MCF 10A (cell line): ENCODE measurements at regions of chr20 and their contacts with region 1.

Region 1: DNA sequence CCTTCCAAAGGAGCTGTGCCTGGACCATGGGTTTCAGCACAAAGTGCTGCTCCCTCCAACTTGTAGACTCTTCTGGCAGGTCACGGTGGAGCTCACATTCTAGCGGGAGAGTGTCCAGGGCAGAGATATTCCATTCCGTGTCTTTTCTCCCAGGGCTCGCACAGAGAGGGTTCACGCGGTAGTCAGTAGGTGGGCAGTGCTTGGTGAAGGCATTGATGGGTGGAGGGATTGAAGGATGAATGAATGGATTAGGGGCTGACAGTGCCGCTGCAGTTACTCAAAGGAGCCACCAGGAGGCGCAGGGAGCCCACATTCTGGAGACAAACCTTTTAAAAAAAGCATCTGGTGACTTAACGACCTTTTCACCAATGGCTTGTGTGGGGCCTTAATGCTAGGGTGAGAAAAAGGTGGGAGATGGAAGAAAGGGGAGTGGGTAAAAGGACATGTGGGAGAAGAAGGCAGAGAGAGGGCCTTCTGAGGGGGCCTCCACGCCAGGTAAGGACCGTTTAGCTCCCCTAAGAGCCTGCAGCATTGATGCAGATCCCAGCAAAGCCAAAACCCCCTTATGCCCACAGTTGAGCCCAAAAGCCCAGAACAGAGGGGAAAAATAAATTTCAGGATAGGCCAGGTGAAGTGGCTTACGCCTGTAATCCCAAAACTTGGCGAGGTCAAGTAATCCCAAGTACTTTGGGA is 17.5 kb upstream of the FAM110A start:
- DNase-seq: peak; percentile 72
- H3K4me3 Mint-ChIP-seq: no peak overlapping the region
- H3K27ac Mint-ChIP-seq: no peak overlapping the region
- H3K4me1 Mint-ChIP-seq: no peaks in the 10 kb centered on the region
- H3K27me3 Mint-ChIP-seq: peaks cover 31% of the 10 kb centered on the region
- CTCF ChIP-seq: peak; percentile 97

Region 2: DNA sequence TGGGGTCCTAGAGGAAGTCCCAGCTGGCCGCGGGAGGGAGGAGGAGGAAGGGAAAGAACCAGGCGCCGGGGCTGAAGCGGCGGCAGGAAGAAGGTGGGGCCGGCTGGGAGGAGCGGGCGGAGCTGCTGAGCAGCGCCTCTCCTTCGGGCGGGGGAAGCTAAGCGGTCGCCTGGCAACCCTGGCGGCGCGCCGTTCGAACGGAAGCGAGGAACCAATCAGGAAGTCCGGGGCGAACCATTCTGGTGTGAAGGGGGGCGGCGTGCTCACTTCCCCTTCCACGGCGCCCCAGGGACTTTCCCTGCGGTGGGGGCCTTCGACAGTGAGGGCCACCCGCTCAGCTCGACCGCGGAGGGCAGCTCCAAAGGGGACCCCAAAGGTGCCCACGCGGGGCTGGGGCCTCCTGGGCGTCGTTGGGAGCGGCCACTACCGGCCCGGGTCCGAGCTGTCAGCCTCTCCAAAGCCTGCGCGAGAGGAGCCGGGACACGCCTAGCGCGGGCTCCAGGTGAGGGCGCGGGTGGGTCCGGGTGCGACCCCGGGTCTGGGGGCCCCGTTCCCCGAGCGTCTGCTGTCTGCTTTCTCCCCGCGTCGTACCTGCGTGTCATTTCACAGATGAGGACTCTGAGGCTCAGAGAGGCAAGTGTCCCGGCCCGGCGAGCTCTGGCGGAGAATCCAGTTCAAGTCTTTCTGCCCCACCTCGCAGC is 17.5 kb after region 1 on chr20 and contains the start of gene FAM110A:
- CTCF ChIA-PET with region 1: interaction called, 43 read pairs
- POLR2A ChIA-PET with region 1: interaction called, 4 read pairs
- intact Hi-C with region 1: no loop called
- DNase-seq: peak; percentile 95
- H3K4me3 Mint-ChIP-seq: peak within 1 kb of the TSS; percentile 88
- H3K27ac Mint-ChIP-seq: peak within 1 kb of the TSS; percentile 79
- H3K4me1 Mint-ChIP-seq: peaks cover 23% of the 10 kb centered on the region
- H3K27me3 Mint-ChIP-seq: no peaks in the 10 kb centered on the region
- CTCF ChIP-seq: no peak
- total RNA-seq, gene FAM110A: 9.2 and 13.6 TPM in 2 replicates

Region 3: DNA sequence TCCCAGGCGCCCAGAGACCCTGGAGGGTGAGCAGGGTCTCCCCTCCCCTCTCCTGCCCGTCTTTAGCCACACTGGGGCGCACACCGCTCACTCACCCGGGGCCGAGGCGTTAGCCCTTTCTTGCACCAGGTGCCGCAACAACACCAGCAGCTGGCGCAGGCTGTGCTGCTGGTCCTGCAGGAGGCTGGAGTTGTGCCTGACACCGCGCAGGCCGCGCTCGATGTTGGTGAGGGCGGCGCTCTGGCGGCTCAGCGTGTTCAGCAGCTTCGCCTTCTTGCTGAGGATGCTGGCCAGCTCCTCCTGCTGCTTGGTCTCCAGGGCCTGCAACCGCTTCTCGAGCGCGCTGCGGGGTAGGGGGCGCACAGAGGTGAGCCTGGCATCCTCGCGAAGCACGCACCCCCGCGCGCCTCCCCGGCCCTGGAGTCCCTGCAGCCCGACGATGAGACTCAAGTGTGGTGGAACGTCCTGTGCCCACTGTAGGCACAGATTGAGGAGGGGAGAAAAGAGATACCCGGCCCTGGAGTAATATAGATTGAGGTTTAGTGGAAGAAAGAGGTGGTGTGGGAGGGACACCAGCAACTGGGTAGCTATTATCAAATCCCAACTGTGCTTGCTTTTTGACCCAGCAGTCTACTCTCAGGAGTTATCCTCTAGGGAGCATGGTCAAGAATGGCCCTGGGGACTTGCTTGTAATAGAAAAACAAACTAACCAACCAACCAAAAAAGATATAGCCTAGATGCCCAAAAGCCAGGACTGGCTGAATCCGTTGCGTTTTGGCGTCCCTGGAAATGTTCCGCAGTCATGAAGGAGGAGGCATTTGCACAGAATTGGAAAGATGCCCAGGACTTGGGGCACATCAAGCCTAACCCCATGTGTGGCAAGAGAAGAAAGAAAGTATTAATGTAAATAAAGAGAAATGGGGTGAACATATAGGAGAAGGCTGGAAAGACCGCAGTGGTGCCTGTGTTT is 69.2 kb after region 1 on chr20:
- CTCF ChIA-PET with region 1: interaction called, 19 read pairs
- POLR2A ChIA-PET with region 1: no interaction called
- intact Hi-C with region 1: loop called (anchors 5 kb)
- DNase-seq: no peak
- H3K4me3 Mint-ChIP-seq: no peak overlapping the region
- H3K27ac Mint-ChIP-seq: no peak overlapping the region
- H3K4me1 Mint-ChIP-seq: peaks cover 37% of the 10 kb centered on the region
- H3K27me3 Mint-ChIP-seq: no peaks in the 10 kb centered on the region
- CTCF ChIP-seq: no peak

Region 4: GRCh38 chr20:967796-968742 is 152.0 kb after region 1 on chr20:
- CTCF ChIA-PET with region 1: interaction called, 26 read pairs
- POLR2A ChIA-PET with region 1: interaction called, 3 read pairs
- intact Hi-C with region 1: loop called (anchors 5 kb)
- DNase-seq: peak; percentile 43
- H3K4me3 Mint-ChIP-seq: no peak overlapping the region
- H3K27ac Mint-ChIP-seq: no peak overlapping the region
- H3K4me1 Mint-ChIP-seq: no peaks in the 10 kb centered on the region
- H3K27me3 Mint-ChIP-seq: peaks cover 51% of the 10 kb centered on the region
- CTCF ChIP-seq: no peak

Region 5: GRCh38 chr20:1108437-1108920 is 292.4 kb after region 1 on chr20:
- CTCF ChIA-PET with region 1: interaction called, 17 read pairs
- POLR2A ChIA-PET with region 1: no interaction called
- intact Hi-C with region 1: loop called (anchors 1 kb)
- DNase-seq: peak; percentile 62
- H3K4me3 Mint-ChIP-seq: no peak overlapping the region
- H3K27ac Mint-ChIP-seq: no peak overlapping the region
- H3K4me1 Mint-ChIP-seq: peaks cover 4% of the 10 kb centered on the region
- H3K27me3 Mint-ChIP-seq: no peaks in the 10 kb centered on the region
- CTCF ChIP-seq: peak; percentile 65